ENCODE measurements at regions of chr19 and their contacts with region 1.

Region 1: GRCh38 chr19:47157431-47158321 is 27.0 kb downstream of the SAE1 start:
- DNase-seq: no peak
- ATAC-seq: peak; percentile 62
- H3K4me3 ChIP-seq: no peak overlapping the region
- H3K27ac ChIP-seq: peak overlapping the region; percentile 8
- H3K4me1 ChIP-seq: peaks cover 24% of the 10 kb centered on the region
- H3K27me3 ChIP-seq: no peaks in the 10 kb centered on the region
- CTCF ChIP-seq: no peak
- EP300 ChIP-seq: no peak
- POLR2A ChIP-seq: no peak
- RAD21 ChIP-seq: no peak

Region 2: GRCh38 chr19:47168065-47168464 is 10.4 kb after region 1 on chr19:
- CTCF ChIA-PET with region 1: no interaction called
- POLR2A ChIA-PET with region 1: interaction called, 14 read pairs
- RAD21 ChIA-PET with region 1: interaction called, 3 read pairs
- SMC1A ChIA-PET with region 1: interaction called, 4 read pairs
- in situ Hi-C with region 1: no loop called
- intact Hi-C with region 1: no loop called
- DNase-seq: no peak
- ATAC-seq: no peak
- H3K4me3 ChIP-seq: no peak overlapping the region
- H3K27ac ChIP-seq: no peak overlapping the region
- H3K4me1 ChIP-seq: no peaks in the 10 kb centered on the region
- H3K27me3 ChIP-seq: no peaks in the 10 kb centered on the region
- CTCF ChIP-seq: no peak
- EP300 ChIP-seq: no peak
- POLR2A ChIP-seq: no peak
- RAD21 ChIP-seq: no peak